Ascending aorta (tissue), 2 donors: ENCODE measurements at regions of chr3 and their contacts with region 1.

Region 1: GRCh38 chr3:124812291-124813265 is 74.6 kb downstream of the ITGB5 start:
- DNase-seq: peak; percentile 78 to 94
- H3K4me3 ChIP-seq: peak overlapping the region in 1 of 2 donors; percentile 25
- H3K27ac ChIP-seq: peak overlapping the region; percentile 88 to 96
- H3K4me1 ChIP-seq: peaks cover 24 to 71% of the 10 kb centered on the region in 2 donors
- H3K27me3 ChIP-seq: no peaks in the 10 kb centered on the region
- CTCF ChIP-seq: no peak

Region 2: GRCh38 chr3:124057420-124057819 is 755.2 kb before region 1 on chr3:
- intact Hi-C with region 1: no loop called
- DNase-seq: peak in 1 of 2 donors; percentile 83
- H3K4me3 ChIP-seq: peak overlapping the region in 1 of 2 donors; percentile 5
- H3K27ac ChIP-seq: peak overlapping the region; percentile 35 to 47
- H3K4me1 ChIP-seq: peaks cover 19 to 42% of the 10 kb centered on the region in 2 donors
- H3K27me3 ChIP-seq: no peaks in the 10 kb centered on the region
- CTCF ChIP-seq: no peak

Region 3: DNA sequence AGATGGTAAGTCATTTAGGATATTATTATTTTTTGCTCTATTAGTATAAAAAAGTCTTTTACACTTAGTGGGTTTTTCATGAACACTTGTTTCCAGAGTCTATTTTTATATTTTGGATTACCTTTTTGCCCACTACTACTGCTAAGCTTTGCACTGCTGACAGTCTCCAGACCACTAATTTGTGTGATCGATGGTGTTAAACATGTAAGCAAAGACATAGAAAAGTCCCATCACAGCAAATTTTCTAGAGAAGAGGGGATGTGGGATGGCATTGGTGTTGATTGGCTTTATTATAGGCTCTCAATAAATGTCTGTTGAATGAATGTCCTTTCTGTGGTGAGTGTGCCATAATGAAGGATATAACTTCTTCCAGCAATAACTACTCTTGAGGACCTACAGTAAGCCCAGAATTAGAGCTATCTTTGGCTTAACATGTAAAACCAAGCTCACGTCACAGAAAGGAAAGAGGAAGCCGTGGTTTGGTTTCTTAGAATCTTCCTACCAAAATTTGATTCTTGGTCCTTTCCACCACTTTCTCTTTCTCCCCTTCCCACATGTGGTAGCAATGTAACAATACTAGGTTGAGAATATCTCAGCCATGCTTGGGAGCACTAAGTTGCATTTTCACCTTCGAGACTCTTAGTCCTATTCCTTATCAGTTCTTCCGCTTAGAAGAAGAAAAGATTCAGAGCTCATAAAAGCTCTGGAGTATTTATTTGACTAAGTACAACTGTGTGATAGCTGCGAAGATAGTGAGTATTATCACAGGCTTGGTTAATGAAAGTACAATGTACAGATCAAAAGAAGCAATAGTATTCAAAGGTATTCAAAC is 173.0 kb before region 1 on chr3:
- intact Hi-C with region 1: no loop called
- DNase-seq: no peak
- H3K4me3 ChIP-seq: no peak overlapping the region
- H3K27ac ChIP-seq: no peak overlapping the region
- H3K4me1 ChIP-seq: no peaks in the 10 kb centered on the region
- H3K27me3 ChIP-seq: no peaks in the 10 kb centered on the region
- CTCF ChIP-seq: no peak

Region 4: DNA sequence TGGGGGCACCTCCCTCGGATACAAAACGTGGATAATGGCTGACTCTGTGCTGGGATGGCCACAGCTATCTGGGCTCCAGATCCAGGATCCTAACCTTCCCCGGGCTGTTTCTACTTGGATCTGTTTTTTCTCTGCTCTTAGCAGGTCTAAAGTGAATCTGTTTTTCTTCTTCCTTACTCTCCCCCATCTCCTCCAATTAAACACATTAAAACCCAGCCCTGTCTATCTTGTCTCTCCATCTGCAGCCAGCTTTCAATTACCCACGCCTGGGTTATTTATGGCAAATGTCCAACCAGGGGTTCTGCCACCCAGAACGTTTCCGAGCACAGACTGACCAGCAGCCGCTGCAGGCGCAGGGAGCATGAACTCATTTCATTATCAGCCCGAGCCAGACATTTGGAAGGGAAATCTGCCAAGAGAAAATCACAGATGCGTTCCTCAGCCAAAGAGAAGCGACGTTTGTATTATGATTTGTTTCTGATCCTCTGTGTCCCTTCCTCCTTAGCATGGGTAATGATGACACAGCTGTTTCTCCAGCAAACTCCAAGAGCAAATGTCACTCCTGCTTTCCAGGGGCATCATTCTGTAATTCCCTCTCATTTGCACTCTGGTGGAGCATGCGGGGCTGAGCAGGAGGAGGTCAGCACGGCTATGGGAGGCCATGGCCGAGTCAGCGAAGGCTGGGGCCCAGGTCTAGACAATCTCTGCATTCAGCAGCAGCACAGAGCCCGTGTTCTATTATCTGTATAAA is 40.3 kb before region 1 on chr3:
- intact Hi-C with region 1: loop called (anchors 5 kb)
- DNase-seq: no peak
- H3K4me3 ChIP-seq: no peak overlapping the region
- H3K27ac ChIP-seq: peak overlapping the region; percentile 51 to 62
- H3K4me1 ChIP-seq: peaks cover 31 to 50% of the 10 kb centered on the region in 2 donors
- H3K27me3 ChIP-seq: no peaks in the 10 kb centered on the region
- CTCF ChIP-seq: no peak

Region 5: DNA sequence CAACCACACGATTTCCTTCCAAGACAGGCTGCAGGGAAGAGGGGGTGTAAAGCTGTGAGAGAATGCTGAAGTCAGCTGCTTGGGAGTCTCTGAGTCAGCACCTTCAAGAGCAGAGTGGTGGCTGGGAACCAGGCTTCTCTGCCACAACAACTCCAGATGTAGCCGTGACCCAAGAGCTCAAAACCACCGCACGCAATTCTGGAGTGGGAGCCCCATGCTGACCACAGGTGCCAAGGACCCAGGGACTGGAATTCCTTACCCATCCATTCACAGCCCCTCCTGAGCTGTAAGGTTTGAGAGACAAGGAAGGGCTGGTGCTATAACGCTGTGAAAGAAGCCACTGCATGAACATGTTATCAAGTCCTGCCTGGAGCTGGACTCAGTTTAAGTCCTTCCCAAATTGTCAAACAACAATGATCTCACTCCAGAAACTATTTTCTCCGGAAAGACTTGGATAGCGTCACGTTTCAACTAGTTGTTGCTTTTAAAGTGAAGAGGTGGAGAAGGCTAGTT is 20.9 kb before region 1 on chr3:
- intact Hi-C with region 1: loop called (anchors 2 kb)
- DNase-seq: peak; percentile 24 to 78
- H3K4me3 ChIP-seq: no peak overlapping the region
- H3K27ac ChIP-seq: peak overlapping the region; percentile 78 to 81
- H3K4me1 ChIP-seq: peaks cover 4 to 56% of the 10 kb centered on the region in 2 donors
- H3K27me3 ChIP-seq: no peaks in the 10 kb centered on the region
- CTCF ChIP-seq: no peak

Region 6: DNA sequence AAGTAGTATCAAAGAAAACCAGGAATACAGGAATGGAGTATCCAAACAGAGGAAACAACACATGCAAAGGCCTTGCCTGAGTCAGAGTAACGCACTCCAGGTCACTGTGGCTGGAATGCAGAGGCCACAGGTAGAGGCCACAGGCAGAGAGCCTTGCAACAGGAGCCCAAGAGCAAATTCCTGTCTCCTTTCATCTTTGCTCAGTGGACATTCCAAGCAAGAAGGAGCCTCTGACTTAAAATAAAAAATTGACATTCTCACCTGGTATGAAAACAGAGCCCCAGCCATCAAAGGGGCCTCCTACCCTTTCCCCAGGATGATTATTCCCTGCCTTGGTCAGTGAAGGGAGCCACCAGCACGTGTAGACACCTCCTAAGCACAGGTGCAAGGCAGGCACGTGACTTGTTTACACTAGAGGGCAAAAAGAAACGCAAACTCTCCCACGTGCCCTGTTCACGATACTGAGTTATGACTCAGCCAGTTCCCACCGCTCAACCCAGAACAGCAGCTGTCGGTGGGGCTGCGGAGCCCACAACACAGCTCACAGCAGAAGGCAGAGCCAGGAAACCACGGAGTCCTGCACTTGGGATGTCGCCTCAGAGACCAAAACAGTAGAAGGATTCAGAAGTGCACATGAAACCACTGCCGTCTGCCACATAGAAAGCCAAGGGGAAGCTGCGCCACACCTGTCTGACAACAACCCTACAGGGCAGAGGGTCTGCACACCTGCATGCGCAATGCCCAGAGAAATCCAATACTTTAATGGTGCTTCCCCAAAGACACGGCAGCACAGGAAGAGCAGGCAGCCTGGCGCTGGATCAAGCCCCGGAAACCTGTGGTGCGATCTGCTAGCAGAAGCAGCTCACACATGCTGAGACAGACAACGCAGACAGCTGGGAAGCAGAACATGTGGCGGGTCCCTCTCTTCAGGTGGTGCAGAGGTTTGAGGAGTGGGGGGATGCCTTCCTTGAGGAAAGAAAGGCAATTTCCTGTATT is 22.4 kb after region 1 on chr3:
- intact Hi-C with region 1: loop called (anchors 2 kb)
- DNase-seq: peak; percentile 63 to 81
- H3K4me3 ChIP-seq: no peak overlapping the region
- H3K27ac ChIP-seq: peak overlapping the region; percentile 85 to 89
- H3K4me1 ChIP-seq: peaks cover 21 to 91% of the 10 kb centered on the region in 2 donors
- H3K27me3 ChIP-seq: no peaks in the 10 kb centered on the region
- CTCF ChIP-seq: no peak

Region 7: DNA sequence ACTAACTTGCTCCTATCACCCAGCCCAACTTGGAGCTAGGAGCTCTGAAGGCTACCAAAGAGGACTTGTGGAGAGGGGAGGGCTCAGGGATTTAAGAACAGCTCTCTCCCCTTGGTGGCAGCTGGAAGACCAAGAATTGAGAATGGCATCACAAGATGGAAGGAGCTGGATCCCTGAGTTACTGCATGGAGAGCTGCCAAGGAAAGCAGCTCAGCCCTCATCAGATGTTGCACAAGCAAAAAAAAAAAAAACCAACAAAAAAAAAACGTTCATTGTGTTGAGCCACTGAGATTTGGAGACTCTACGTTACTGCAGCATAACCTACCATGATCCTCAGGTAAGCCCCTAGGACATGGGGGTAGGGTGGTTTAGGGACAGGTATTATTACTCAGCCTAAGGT is 33.6 kb after region 1 on chr3:
- intact Hi-C with region 1: loop called (anchors 2 kb)
- DNase-seq: peak in 1 of 2 donors; percentile 80
- H3K4me3 ChIP-seq: no peak overlapping the region
- H3K27ac ChIP-seq: peak overlapping the region; percentile 86 to 89
- H3K4me1 ChIP-seq: peaks cover 24 to 66% of the 10 kb centered on the region in 2 donors
- H3K27me3 ChIP-seq: no peaks in the 10 kb centered on the region
- CTCF ChIP-seq: no peak

Region 8: GRCh38 chr3:125119752-125120378 is 307.3 kb after region 1 on chr3:
- intact Hi-C with region 1: no loop called
- DNase-seq: no peak
- H3K4me3 ChIP-seq: peak overlapping the region in 1 of 2 donors; percentile 55
- H3K27ac ChIP-seq: no peak overlapping the region
- H3K4me1 ChIP-seq: peaks cover 0 to 14% of the 10 kb centered on the region in 2 donors
- H3K27me3 ChIP-seq: no peaks in the 10 kb centered on the region
- CTCF ChIP-seq: no peak